Gastrocnemius medialis (tissue), 4 donors: ENCODE measurements at regions of chr20 and their contacts with region 1.

Region 1: DNA sequence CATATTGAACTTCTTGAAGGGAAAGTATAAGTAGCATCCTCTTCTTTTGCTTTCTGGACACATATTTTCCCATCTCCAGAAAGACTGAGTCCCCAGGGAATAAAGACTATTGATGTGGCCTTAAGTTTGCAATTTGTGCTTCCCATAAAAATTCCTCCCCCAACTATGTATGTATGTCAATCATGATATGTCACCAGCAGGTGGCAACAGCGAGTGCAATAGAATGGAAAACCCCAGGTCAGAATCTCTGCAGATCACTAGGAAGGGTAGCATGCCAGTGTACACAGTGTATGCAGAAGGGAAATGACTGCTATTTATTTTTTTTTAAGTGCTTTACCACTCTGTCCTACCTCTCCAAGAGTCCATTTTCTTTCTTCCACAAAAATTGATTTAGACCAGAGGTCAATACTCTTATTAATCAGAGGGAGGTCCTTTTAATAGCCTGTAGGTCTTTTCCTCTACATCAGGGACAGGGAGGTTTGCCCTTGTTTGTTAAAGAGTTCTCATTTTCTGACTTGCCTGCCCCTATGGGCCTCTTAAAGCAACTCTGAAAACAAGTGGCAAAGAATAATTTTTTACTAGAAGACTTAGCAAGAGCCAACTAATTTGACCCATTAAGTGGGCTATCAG is 61.4 kb downstream of the BMP2 start:
- DNase-seq: peak; percentile 4 to 33
- ATAC-seq: no peak
- H3K4me3 ChIP-seq: no peak overlapping the region
- H3K27ac ChIP-seq: no peak overlapping the region
- H3K4me1 ChIP-seq: no peaks in the 10 kb centered on the region
- H3K27me3 ChIP-seq: no peaks in the 10 kb centered on the region
- CTCF ChIP-seq: peak in 4 of 5 experiments; percentile 14 to 59 (median 48)
- POLR2A ChIP-seq: no peak

Region 2: GRCh38 chr20:7285918-7286556 is 457.1 kb after region 1 on chr20:
- in situ Hi-C with region 1: loop called in 1 of 4 experiments (anchors 25 kb)
- intact Hi-C with region 1: loop called (anchors 10 kb)
- DNase-seq: peak; percentile 31 to 52
- ATAC-seq: peak; percentile 30 to 83
- H3K4me3 ChIP-seq: no peak overlapping the region
- H3K27ac ChIP-seq: no peak overlapping the region
- H3K4me1 ChIP-seq: no peaks in the 10 kb centered on the region
- H3K27me3 ChIP-seq: no peaks in the 10 kb centered on the region
- CTCF ChIP-seq: peak; percentile 43 to 77 (median 60)
- POLR2A ChIP-seq: no peak

Region 3: DNA sequence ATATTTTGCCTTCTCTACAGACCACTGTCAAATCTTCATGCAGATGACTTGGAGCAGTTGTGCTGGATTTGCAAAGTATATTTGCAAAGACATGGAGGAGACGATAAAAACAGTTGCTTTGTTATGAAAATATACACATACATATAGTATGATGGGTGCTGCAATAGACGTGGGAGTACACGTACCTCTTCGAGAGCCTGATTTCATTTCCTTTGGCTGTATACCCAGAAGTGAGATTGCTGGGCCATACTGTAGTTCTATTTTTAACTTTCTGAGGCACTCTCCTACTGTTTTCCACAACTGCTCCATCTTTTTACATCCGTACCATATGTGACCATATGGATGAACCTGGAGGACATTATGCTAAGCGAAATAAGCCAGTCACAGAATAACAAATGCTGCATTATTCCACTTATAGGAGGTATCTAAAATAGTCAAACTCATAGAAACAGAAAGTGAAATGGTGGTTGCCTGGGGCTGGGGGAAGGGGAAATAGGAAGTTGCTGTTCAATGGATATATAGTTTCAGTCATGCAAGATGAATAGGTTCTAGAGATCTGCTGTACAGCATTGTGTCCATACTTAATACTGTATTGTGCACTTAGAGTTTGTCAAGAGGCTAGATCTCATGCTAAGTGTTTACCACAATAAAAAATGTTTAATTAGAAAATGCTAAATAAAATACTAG is 887.5 kb after region 1 on chr20:
- in situ Hi-C with region 1: no loop called
- intact Hi-C with region 1: loop called (anchors 5 kb)
- DNase-seq: no peak
- ATAC-seq: no peak
- H3K4me3 ChIP-seq: no peak overlapping the region
- H3K27ac ChIP-seq: no peak overlapping the region
- H3K4me1 ChIP-seq: no peaks in the 10 kb centered on the region
- H3K27me3 ChIP-seq: no peaks in the 10 kb centered on the region
- CTCF ChIP-seq: no peak
- POLR2A ChIP-seq: no peak

Region 4: DNA sequence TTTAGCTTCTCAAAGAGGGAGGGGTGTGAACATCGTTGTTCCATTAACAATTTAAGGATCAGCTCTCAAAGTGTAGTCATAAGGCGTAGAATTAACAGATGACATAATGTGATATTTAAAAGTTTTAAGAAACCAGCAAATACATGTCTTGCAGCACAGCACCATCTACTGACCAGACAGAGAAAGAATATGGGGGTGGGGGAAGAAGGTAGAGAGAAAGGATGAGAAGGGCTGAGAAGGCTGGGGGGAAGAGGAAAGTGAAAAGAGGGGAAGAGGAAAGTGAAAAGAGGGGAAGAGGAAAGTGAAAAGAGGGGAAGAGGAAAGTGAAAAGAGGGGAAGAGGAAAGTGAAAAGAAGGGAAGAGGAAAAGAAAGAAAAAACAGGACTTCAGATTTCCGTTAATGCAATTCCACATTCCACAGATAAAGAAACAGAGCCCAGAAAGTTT is 1030.5 kb after region 1 on chr20:
- in situ Hi-C with region 1: loop called in 2 of 4 experiments (anchors 10 to 25 kb)
- intact Hi-C with region 1: loop called (anchors 5 kb)
- DNase-seq: no peak
- ATAC-seq: peak in 1 of 2 donors; percentile 68
- H3K4me3 ChIP-seq: no peak overlapping the region
- H3K27ac ChIP-seq: no peak overlapping the region
- H3K4me1 ChIP-seq: no peaks in the 10 kb centered on the region
- H3K27me3 ChIP-seq: no peaks in the 10 kb centered on the region
- CTCF ChIP-seq: peak in 2 of 5 experiments; percentile 26 to 43
- POLR2A ChIP-seq: no peak